Endothelial cell of umbilical vein (primary cell): ENCODE measurements at regions of chr14 and their contacts with region 1.

Region 1: DNA sequence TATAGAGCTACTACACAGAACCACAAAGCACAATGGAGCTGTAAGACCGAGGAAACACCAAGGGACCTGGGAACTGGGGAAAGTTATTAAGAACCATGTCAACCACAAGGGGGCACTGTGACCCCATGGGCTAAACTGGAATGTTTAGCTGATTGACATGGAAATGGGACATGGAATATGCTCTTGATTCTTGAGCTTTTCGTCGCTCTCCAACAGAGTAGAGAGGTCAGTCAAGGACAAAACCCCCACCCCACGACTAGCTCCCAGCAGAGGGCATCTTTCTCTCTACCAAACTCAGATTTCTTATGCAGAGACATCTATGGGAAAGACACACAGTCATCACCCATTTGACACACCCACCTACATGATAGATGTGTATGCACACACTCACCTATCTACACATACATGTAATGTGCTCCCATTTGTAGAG is 10.1 kb downstream of the NDRG2 start:
- DNase-seq: peak; percentile 83
- H3K4me3 ChIP-seq: no peak overlapping the region
- H3K27ac ChIP-seq: no peak overlapping the region
- H3K4me1 ChIP-seq: no peaks in the 10 kb centered on the region
- H3K27me3 ChIP-seq: peaks cover 19 to 23% of the 10 kb centered on the region in 2 experiments
- CTCF ChIP-seq: peak; percentile 77 to 78
- POLR2A ChIP-seq: no peak

Region 2: GRCh38 chr14:21003788-21004346 is 10.9 kb before region 1 on chr14:
- CTCF ChIA-PET with region 1: interaction called, 42 read pairs
- POLR2A ChIA-PET with region 1: no interaction called
- dilution Hi-C with region 1: no loop called
- intact Hi-C with region 1: no loop called
- DNase-seq: no peak
- H3K4me3 ChIP-seq: no peak overlapping the region
- H3K27ac ChIP-seq: no peak overlapping the region
- H3K4me1 ChIP-seq: no peaks in the 10 kb centered on the region
- H3K27me3 ChIP-seq: no peaks in the 10 kb centered on the region
- CTCF ChIP-seq: no peak
- POLR2A ChIP-seq: no peak

Region 3: GRCh38 chr14:21049271-21049673 is 34.5 kb after region 1 on chr14:
- CTCF ChIA-PET with region 1: interaction called, 214 read pairs
- POLR2A ChIA-PET with region 1: no interaction called
- dilution Hi-C with region 1: no loop called
- intact Hi-C with region 1: no loop called
- DNase-seq: no peak
- H3K4me3 ChIP-seq: no peak overlapping the region
- H3K27ac ChIP-seq: no peak overlapping the region
- H3K4me1 ChIP-seq: no peaks in the 10 kb centered on the region
- H3K27me3 ChIP-seq: peaks cover 24 to 25% of the 10 kb centered on the region in 2 experiments
- CTCF ChIP-seq: no peak
- POLR2A ChIP-seq: no peak

Region 4: DNA sequence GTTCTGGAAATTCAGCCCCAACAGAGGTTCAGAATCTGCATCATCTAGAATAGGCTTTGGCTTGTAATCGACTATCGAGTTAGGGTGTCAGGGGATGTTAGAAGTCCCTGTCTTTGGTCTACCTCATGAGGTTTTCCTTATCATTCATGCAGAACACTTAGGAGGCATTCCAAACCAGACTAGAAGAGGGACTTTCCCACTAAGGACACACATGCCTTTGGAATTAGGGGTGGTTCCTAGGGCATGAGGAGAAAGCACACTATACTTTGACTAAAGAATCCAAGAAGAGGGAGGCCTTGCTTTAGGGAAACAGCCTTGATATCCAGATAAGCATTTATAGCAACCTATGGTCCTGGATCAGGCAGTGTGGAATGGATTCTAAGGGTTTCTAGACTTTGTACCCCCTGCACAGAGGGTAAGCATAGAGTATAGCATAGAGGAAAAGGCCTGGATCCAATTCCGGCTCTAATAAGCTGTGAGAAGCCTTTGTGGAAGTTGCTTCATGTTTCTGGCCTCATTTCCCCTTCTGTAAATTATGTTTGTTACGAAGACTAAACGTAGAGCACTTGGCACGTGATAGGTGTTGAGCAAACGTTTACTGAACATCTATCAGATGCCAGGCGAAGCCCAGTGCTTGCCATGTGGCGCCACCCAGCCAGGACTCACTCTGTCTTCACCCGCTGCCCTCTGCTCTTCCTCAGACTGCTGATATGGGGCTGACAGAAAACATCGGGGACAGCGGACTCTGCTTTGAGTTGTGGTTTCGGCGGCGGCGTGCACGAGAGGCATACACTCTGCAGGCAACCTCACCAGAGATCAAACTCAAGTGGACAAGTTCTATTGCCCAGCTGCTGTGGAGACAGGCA is 70.4 kb after region 1 on chr14:
- CTCF ChIA-PET with region 1: interaction called, 60 read pairs
- POLR2A ChIA-PET with region 1: no interaction called
- dilution Hi-C with region 1: no loop called
- intact Hi-C with region 1: no loop called
- DNase-seq: no peak
- H3K4me3 ChIP-seq: no peak overlapping the region
- H3K27ac ChIP-seq: no peak overlapping the region
- H3K4me1 ChIP-seq: no peaks in the 10 kb centered on the region
- H3K27me3 ChIP-seq: no peaks in the 10 kb centered on the region
- CTCF ChIP-seq: no peak
- POLR2A ChIP-seq: no peak

Region 5: GRCh38 chr14:21121106-21121505 is 106.3 kb after region 1 on chr14:
- CTCF ChIA-PET with region 1: interaction called, 11 read pairs
- POLR2A ChIA-PET with region 1: no interaction called
- dilution Hi-C with region 1: no loop called
- intact Hi-C with region 1: no loop called
- DNase-seq: no peak
- H3K4me3 ChIP-seq: no peak overlapping the region
- H3K27ac ChIP-seq: no peak overlapping the region
- H3K4me1 ChIP-seq: no peaks in the 10 kb centered on the region
- H3K27me3 ChIP-seq: peaks cover 5 to 18% of the 10 kb centered on the region in 2 experiments
- CTCF ChIP-seq: no peak
- POLR2A ChIP-seq: no peak